Right ventricle myocardium inferior (tissue), 1 donor: ENCODE measurements at regions of chr6 and their contacts with region 1.

Region 1: GRCh38 chr6:106444777-106445507 is 84.4 kb downstream of the CRYBG1 start:
- DNase-seq: no peak
- ATAC-seq: peak; percentile 57

Region 2: GRCh38 chr6:105941621-105942412 is 503.1 kb before region 1 on chr6:
- intact Hi-C with region 1: no loop called
- DNase-seq: no peak
- ATAC-seq: no peak

Region 3: DNA sequence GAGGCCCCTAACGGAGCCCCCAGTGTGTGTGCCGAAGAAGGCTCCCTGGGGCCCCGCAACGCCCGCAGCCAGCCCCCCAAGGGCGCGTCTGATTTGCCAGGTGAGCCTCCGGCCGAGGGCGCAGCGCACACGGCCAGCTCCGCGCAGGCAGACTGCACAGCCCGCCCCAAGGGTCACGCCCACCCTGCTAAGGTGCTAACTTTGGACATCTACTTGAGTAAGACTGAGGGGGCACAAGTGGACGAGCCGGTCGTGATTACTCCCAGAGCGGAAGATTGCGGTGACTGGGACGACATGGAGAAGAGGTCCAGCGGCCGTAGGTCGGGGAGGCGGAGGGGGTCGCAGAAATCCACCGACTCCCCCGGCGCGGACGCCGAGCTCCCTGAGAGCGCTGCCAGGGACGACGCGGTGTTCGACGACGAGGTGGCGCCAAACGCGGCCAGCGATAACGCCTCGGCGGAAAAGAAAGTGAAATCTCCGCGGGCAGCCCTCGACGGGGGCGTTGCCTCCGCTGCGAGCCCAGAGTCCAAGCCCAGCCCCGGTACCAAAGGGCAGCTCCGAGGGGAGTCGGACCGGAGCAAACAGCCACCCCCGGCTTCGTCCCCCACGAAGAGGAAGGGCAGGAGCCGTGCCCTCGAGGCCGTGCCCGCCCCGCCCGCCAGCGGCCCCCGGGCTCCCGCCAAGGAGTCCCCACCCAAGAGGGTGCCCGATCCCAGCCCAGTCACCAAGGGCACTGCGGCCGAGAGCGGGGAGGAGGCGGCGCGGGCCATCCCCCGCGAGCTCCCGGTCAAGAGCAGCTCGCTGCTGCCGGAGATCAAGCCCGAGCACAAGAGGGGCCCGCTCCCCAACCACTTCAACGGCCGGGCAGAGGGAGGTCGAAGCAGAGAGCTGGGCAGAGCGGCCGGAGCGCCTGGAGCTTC is 67.4 kb after region 1 on chr6:
- intact Hi-C with region 1: loop called (anchors 10 kb)
- DNase-seq: peak; percentile 90
- ATAC-seq: peak; percentile 77

Region 4: DNA sequence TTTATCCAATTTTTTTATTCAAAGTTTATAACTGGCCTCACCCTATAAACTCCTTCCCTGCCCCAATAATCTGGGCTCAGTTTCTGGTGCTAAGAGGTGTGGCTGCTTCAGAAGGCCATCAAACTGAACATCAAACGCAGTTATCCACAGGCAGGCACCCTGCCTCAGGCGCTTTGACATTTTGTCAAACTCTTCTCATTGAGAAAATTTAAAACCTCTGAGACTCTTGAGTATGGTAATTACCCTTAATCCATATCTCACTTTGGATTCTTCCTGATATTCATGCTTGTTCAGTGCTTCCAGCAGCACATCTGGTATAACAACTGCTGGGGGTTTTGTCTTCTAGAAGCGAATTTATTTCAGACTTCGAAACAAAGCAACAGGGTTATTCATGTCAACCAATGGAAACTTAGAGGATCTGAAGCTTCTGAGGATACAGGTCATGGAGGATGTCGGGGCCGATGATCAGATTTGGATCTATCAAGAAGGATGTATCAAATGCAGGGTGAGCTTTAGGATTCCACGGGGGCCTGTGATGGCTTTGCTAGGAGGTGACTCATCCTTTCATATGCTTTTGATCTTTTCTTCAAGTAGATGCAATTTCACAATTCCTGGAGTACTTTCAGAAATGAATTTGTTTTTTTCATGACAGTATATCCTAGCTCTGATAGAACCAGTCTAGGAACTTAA is 116.2 kb after region 1 on chr6:
- intact Hi-C with region 1: loop called (anchors 1 kb)
- DNase-seq: no peak
- ATAC-seq: no peak

Region 5: DNA sequence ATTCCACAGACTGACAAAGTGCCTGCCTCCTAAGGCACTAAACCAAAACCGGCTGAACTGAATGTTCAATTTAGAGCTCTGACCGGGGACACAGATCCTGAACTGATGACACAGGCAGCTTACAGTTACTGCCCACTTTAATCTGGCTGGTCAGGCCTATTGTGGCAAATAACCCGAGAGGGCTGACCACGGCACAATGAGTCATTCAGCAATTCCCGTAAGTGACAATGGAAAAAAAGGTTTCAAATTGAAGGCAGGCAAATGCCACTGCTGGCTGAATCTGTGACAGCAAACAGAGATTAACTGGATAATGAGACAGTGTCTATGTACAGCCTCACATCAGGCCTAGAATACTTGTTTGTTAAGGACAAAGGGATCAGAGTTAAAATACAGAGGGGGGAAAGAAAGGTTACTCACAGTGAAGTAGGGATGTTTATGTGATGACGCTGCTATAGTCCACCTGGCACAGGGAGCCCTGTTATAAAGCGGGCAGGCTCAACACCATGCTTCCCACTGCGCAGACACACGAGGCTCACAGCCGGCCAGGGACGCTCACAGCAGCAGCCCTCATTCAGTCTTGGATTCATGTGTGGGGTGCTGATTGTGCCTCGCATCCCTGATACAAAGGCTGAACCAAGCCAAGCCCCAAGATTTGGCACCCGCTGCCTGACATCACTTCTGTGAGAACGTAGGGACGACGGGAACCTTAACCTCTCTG is 130.0 kb after region 1 on chr6:
- intact Hi-C with region 1: no loop called
- DNase-seq: no peak
- ATAC-seq: no peak